GM10248 (cell line): ENCODE measurements at regions of chr2 and their contacts with region 1.

Region 1: DNA sequence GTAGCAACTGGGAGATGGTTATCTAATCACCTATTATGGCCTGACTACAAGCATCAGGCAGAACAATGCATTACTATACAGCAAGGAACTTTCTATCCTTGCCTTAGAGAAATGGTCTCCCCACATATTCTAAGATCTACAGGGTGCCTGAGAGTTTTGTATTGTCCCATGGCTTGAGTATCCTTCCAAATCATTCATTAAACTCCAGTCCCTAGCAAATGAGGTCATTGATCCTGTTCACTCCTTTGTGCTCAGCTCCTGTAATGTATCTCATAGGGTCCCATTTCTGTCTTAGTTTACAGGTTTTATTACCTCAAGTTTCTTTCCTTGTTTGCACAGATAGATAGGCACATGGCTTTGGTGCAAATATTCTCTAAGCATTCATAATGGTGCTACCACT is 9.0 kb downstream of the HNMT start:
- DNase-seq: no peak
- CTCF ChIP-seq: no peak

Region 2: GRCh38 chr2:137947728-137948336 is 25.4 kb before region 1 on chr2:
- CTCF ChIA-PET with region 1: interaction called, 4 read pairs
- POLR2A ChIA-PET with region 1: interaction called, 11 read pairs
- DNase-seq: peak; percentile 19
- CTCF ChIP-seq: peak; percentile 45